Activated naive CD4-positive, alpha-beta T cell treated with anti-CD3 and anti-CD28 coated beads, Interleukin-2, amount 10 ng/mL, durations not matched to agents 7 days and 5 days (primary cell): ENCODE measurements at regions of chr7 and their contacts with region 1.

Region 1: DNA sequence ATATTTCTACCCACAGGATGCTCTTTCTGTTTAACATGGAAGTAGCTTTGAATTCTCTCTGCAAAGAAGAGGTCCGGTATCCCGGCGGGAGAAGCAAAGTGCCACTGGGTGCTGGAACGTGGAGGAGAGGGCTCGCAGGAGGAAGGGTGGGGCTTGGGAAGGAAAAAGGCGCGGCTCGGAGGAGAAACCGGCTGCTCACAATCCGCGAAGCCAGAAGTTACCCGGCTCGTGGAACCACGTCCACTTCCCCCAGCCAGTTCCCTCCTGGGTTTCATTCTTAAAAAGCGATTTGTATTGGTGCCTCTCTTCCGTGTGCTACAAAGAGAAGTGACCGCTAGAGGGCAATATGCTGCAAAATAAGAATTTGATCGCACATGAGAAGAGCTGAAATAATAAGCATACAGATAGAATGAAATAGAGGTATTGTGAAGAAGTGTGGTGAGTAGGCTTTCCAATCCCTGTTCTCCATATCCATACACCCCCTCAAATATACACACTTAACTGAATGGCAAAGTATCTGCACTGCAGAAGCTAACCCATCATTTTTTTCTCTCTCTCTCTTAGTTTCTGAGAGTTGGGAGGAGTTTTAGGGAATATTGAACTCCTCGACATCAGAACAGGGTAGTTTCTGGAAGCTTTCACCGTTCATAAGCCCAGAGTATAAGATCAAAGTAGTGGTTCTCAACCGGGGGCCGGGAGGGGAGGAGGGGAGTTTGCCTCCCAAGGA is 31.1 kb downstream of the TRIL start:
- DNase-seq: peak; percentile 66
- H3K4me3 Mint-ChIP-seq: peak overlapping the region; percentile 75
- H3K27ac Mint-ChIP-seq: no peak overlapping the region
- H3K4me1 Mint-ChIP-seq: peaks cover 20% of the 10 kb centered on the region
- H3K27me3 Mint-ChIP-seq: peaks cover 21% of the 10 kb centered on the region

Region 2: GRCh38 chr7:28955718-28956619 is 28.9 kb after region 1 on chr7:
- CTCF ChIA-PET with region 1: interaction called, 33 read pairs
- DNase-seq: peak; percentile 27
- H3K4me3 Mint-ChIP-seq: no peak overlapping the region
- H3K27ac Mint-ChIP-seq: no peak overlapping the region
- H3K4me1 Mint-ChIP-seq: peaks cover 9% of the 10 kb centered on the region
- H3K27me3 Mint-ChIP-seq: peaks cover 65% of the 10 kb centered on the region

Region 3: DNA sequence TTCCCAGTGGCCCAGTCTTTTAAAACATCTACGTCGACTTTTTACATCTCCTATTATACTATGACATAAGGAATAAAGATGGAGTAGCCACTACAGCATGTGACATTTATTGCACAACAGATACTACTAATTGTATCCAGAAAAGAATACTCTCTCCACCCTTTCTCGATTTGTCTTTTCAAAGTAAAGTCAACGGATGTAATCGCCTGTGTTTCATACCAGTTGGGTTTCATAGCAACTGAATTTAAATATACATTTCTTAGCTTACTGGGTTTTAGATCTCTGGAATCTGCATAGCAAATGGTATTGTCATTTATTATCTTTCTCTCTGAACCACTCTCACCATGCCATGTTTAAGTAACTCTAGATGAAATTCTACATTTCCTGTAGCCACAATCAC is 117.5 kb after region 1 on chr7:
- CTCF ChIA-PET with region 1: no interaction called
- DNase-seq: no peak
- H3K4me3 Mint-ChIP-seq: no peak overlapping the region
- H3K27ac Mint-ChIP-seq: no peak overlapping the region
- H3K4me1 Mint-ChIP-seq: no peaks in the 10 kb centered on the region
- H3K27me3 Mint-ChIP-seq: no peaks in the 10 kb centered on the region

Region 4: GRCh38 chr7:29091715-29092114 is 164.7 kb after region 1 on chr7:
- CTCF ChIA-PET with region 1: interaction called, 130 read pairs
- DNase-seq: peak; percentile 31
- H3K4me3 Mint-ChIP-seq: peak overlapping the region; percentile 82
- H3K27ac Mint-ChIP-seq: peak overlapping the region; percentile 92
- H3K4me1 Mint-ChIP-seq: peaks cover 34% of the 10 kb centered on the region
- H3K27me3 Mint-ChIP-seq: peaks cover 14% of the 10 kb centered on the region

Region 5: DNA sequence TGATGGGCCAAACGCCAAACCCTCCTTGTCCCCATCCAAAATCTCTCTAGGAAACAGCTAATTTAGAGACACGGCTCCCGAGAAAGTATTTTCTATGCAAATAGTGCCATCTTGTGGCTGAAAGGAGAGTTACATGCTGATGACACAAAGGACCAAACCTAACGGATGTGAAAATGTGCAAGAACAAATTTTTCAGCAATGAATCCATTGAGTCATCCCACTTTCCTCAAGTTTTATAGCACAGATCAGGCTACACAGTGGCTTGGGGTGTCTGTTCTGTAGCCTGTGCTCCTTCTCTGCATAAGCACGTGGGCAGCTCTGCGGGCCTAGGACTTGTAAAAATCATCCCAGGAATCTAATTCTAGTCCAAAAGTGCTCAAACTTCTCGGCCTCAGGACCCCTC is 481.8 kb after region 1 on chr7:
- CTCF ChIA-PET with region 1: interaction called, 115 read pairs
- DNase-seq: peak; percentile 58
- H3K4me3 Mint-ChIP-seq: no peak overlapping the region
- H3K27ac Mint-ChIP-seq: no peak overlapping the region
- H3K4me1 Mint-ChIP-seq: no peaks in the 10 kb centered on the region
- H3K27me3 Mint-ChIP-seq: peaks cover 16% of the 10 kb centered on the region